ENCODE measurements at regions of chr11 and their contacts with region 1.

Region 1: GRCh38 chr11:18721561-18722292 is 4.3 kb downstream of the IGSF22 start:
- DNase-seq: peak in 8 of 9 experiments; percentile 24 to 75 (median 50)
- ATAC-seq: peak; percentile 48
- H3K4me3 ChIP-seq: peak overlapping the region; percentile 80 to 92
- H3K4me3 Mint-ChIP-seq: peak overlapping the region; percentile 84
- H3K27ac ChIP-seq: peak overlapping the region; percentile 12 to 48
- H3K27ac Mint-ChIP-seq: no peak overlapping the region
- H3K4me1 ChIP-seq: peaks cover 4% of the 10 kb centered on the region
- H3K4me1 Mint-ChIP-seq: peaks cover 7% of the 10 kb centered on the region
- H3K27me3 ChIP-seq: no peaks in the 10 kb centered on the region
- H3K27me3 Mint-ChIP-seq: no peaks in the 10 kb centered on the region
- CTCF ChIP-seq: peak; percentile 80

Region 2: GRCh38 chr11:18383388-18384156 is 338.2 kb before region 1 on chr11:
- CTCF ChIA-PET with region 1: no interaction called
- POLR2A ChIA-PET with region 1: interaction called, 4 read pairs
- intact Hi-C with region 1: loop called in 1 of 2 experiments (anchors 5 kb)
- DNase-seq: peak; percentile 20 to 88 (median 63)
- ATAC-seq: peak; percentile 86
- H3K4me3 ChIP-seq: peak overlapping the region in 1 of 2 experiments; percentile 29
- H3K4me3 Mint-ChIP-seq: peak overlapping the region; percentile 67
- H3K27ac ChIP-seq: peak overlapping the region; percentile 55 to 83
- H3K27ac Mint-ChIP-seq: peak overlapping the region; percentile 98
- H3K4me1 ChIP-seq: peaks cover 30% of the 10 kb centered on the region
- H3K4me1 Mint-ChIP-seq: peaks cover 30% of the 10 kb centered on the region
- H3K27me3 ChIP-seq: no peaks in the 10 kb centered on the region
- H3K27me3 Mint-ChIP-seq: no peaks in the 10 kb centered on the region
- CTCF ChIP-seq: no peak

Region 3: DNA sequence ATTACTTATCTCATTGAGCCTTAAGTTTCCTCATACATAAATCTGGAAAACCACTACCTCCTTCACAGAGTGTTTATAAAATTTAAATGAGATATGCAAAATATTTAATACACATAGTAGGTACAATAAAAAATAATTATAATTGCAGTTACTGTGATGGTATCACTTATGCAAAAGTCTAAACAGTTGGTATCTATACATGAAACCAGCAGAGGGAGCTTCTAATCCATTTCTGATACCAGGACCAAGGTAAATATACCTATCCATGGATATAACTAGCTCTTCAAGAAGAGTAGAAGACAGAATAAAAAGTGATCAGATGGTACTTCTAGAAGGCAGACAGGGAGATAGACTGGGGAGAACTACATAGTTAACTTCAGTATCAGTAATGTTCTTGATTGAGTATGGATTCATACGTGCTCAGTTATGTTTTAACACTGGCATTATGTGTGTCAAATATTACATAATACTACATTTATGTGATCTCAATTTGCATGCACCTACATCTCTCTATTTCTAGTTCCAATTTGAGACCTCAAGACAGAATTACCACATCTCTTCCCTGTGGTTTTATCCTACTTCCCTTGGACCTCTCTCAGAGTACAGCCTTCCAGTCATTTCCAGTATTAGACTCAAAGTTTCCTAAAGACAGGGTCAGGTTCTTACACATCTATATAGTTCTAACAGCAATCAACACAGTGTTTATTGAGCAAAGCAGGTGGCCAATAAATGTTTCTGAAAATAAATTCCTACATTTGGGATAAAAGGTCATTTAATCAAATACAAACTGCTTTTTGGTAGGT is 181.3 kb before region 1 on chr11:
- CTCF ChIA-PET with region 1: interaction called, 31 read pairs
- POLR2A ChIA-PET with region 1: no interaction called
- intact Hi-C with region 1: no loop called
- DNase-seq: peak in 2 of 9 experiments; percentile 52 to 64
- ATAC-seq: peak; percentile 63
- H3K4me3 ChIP-seq: no peak overlapping the region
- H3K4me3 Mint-ChIP-seq: no peak overlapping the region
- H3K27ac ChIP-seq: no peak overlapping the region
- H3K27ac Mint-ChIP-seq: no peak overlapping the region
- H3K4me1 ChIP-seq: no peaks in the 10 kb centered on the region
- H3K4me1 Mint-ChIP-seq: no peaks in the 10 kb centered on the region
- H3K27me3 ChIP-seq: no peaks in the 10 kb centered on the region
- H3K27me3 Mint-ChIP-seq: no peaks in the 10 kb centered on the region
- CTCF ChIP-seq: peak; percentile 59

Region 4: GRCh38 chr11:18578975-18579598 is 142.6 kb before region 1 on chr11:
- CTCF ChIA-PET with region 1: no interaction called
- POLR2A ChIA-PET with region 1: no interaction called
- intact Hi-C with region 1: no loop called
- DNase-seq: peak in 1 of 9 experiments; percentile 16
- ATAC-seq: peak; percentile 34
- H3K4me3 ChIP-seq: no peak overlapping the region
- H3K4me3 Mint-ChIP-seq: peak overlapping the region; percentile 54
- H3K27ac ChIP-seq: no peak overlapping the region
- H3K27ac Mint-ChIP-seq: peak overlapping the region; percentile 75
- H3K4me1 ChIP-seq: no peaks in the 10 kb centered on the region
- H3K4me1 Mint-ChIP-seq: peaks cover 5% of the 10 kb centered on the region
- H3K27me3 ChIP-seq: no peaks in the 10 kb centered on the region
- H3K27me3 Mint-ChIP-seq: no peaks in the 10 kb centered on the region
- CTCF ChIP-seq: no peak

Region 5: GRCh38 chr11:18669220-18669598 is 52.5 kb before region 1 on chr11:
- CTCF ChIA-PET with region 1: interaction called, 3 read pairs
- POLR2A ChIA-PET with region 1: no interaction called
- intact Hi-C with region 1: loop called in 1 of 2 experiments (anchors 2 kb)
- DNase-seq: peak in 4 of 9 experiments; percentile 2 to 17 (median 16)
- ATAC-seq: no peak
- H3K4me3 ChIP-seq: no peak overlapping the region
- H3K4me3 Mint-ChIP-seq: no peak overlapping the region
- H3K27ac ChIP-seq: no peak overlapping the region
- H3K27ac Mint-ChIP-seq: peak overlapping the region; percentile 7
- H3K4me1 ChIP-seq: peaks cover 37% of the 10 kb centered on the region
- H3K4me1 Mint-ChIP-seq: peaks cover 53% of the 10 kb centered on the region
- H3K27me3 ChIP-seq: no peaks in the 10 kb centered on the region
- H3K27me3 Mint-ChIP-seq: no peaks in the 10 kb centered on the region
- CTCF ChIP-seq: no peak

Region 6: DNA sequence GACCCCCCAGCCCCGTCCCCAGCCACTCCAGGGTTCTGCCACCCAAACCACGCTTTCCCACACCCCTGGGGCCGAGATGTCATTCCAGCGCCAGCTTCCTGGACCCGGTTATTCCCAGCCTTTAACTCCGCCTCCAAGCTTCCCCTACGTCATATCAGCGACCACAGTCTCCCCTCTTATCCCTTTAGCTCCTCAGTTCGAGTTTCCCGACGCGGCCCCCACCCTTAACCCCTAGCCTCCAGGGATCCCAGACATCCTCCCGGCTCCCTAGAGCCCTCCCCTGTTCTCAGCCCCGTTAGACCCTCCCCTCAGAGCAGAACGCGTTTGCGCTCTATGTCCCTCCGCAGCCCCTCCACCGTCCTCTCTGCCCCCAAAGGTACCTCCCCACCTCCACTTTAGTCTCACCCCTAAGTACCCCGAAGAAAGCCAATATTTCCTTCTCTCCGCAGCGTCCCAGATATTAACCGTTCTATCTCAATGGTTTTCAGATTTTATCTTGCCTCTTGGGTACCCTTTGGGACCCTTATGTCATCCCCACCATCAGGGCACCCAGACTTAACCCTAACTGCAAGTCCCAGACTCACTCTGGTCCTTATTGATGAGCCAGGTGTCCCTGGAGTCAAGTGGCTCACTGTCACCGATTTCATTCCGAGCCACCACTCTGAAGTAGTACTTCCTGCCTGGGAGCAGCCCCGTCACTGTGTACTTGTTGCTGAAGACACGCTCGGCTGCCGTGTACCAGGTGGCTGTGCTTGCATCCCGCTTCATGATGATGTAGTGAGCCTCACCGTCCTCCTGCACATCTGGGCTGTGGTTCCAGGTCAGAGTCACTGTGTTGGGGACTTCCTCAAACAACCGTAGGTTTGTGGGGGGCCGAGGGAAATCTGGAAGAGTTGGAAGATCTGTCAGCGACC is 15.1 kb before region 1 on chr11:
- CTCF ChIA-PET with region 1: interaction called, 18 read pairs
- POLR2A ChIA-PET with region 1: interaction called, 5 read pairs
- intact Hi-C with region 1: loop called in 1 of 2 experiments (anchors 1 kb)
- DNase-seq: peak; percentile 29 to 83 (median 57)
- ATAC-seq: peak; percentile 81
- H3K4me3 ChIP-seq: peak overlapping the region; percentile 55 to 83
- H3K4me3 Mint-ChIP-seq: peak overlapping the region; percentile 94
- H3K27ac ChIP-seq: peak overlapping the region; percentile 39 to 56
- H3K27ac Mint-ChIP-seq: peak overlapping the region; percentile 94
- H3K4me1 ChIP-seq: peaks cover 7% of the 10 kb centered on the region
- H3K4me1 Mint-ChIP-seq: peaks cover 22% of the 10 kb centered on the region
- H3K27me3 ChIP-seq: no peaks in the 10 kb centered on the region
- H3K27me3 Mint-ChIP-seq: no peaks in the 10 kb centered on the region
- CTCF ChIP-seq: no peak

Measured in CD8-positive, alpha-beta T cell (primary cell).